Activated CD4-positive, alpha-beta T cell treated with anti-CD3 and anti-CD28 coated beads for 36 hours (primary cell): ENCODE measurements at regions of chr17 and their contacts with region 1.

Region 1: GRCh38 chr17:42609182-42609813 is at the starts of genes RETREG3 and TUBG1:
- DNase-seq: peak; percentile 100
- ATAC-seq: peak; percentile 92
- H3K4me3 Mint-ChIP-seq: peak within 1 kb of the TSS; percentile 95
- H3K27ac Mint-ChIP-seq: peak within 1 kb of the TSS; percentile 97
- H3K4me1 Mint-ChIP-seq: peaks cover 35% of the 10 kb centered on the region
- H3K27me3 Mint-ChIP-seq: no peaks in the 10 kb centered on the region
- total RNA-seq, gene RETREG3: 28.3 to 30.9 TPM
- total RNA-seq, gene TUBG1: 76.1 to 102 TPM

Region 2: DNA sequence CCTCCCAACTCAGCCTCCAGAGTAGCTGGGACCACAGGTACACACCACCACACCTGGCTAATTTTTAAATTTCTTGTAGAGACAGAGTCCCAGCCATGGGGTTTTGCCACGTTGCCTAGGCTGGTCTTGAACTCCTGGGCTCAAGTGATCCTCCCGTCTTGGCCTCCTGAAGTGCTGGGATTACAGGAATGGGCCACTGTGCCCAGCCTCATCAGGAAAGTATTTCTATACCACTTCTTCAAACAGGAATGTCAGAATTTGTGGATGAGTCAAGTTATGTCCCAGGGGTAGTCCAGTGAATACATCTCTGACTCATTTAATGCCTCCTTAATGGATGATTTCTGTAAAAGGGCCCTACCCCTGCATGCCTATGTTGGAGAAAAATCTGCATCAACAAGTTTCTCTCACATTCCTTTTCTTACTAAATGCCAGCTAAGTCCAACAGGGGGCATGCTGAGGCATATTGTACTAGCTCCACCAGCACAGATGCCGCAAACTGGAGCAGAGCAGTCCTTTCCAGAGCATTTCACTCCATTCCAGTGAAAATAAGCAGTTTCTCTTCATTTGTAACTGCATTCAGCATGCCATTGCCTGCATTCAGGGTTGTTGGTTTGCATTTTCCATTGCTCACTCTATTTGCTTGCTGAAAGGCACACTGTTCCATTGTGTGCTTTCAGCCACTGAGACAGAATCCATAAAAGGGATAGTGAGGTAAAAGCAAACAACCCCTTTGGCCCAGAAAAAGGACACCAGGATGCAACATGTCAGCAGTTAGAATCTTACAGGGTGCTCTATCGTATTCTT is 181.0 kb before region 1 on chr17:
- CTCF ChIA-PET with region 1: no interaction called
- POLR2A ChIA-PET with region 1: no interaction called
- intact Hi-C with region 1: no loop called
- DNase-seq: peak; percentile 58
- ATAC-seq: peak; percentile 81
- H3K4me3 Mint-ChIP-seq: no peak overlapping the region
- H3K27ac Mint-ChIP-seq: no peak overlapping the region
- H3K4me1 Mint-ChIP-seq: no peaks in the 10 kb centered on the region
- H3K27me3 Mint-ChIP-seq: peaks cover 14% of the 10 kb centered on the region

Region 3: DNA sequence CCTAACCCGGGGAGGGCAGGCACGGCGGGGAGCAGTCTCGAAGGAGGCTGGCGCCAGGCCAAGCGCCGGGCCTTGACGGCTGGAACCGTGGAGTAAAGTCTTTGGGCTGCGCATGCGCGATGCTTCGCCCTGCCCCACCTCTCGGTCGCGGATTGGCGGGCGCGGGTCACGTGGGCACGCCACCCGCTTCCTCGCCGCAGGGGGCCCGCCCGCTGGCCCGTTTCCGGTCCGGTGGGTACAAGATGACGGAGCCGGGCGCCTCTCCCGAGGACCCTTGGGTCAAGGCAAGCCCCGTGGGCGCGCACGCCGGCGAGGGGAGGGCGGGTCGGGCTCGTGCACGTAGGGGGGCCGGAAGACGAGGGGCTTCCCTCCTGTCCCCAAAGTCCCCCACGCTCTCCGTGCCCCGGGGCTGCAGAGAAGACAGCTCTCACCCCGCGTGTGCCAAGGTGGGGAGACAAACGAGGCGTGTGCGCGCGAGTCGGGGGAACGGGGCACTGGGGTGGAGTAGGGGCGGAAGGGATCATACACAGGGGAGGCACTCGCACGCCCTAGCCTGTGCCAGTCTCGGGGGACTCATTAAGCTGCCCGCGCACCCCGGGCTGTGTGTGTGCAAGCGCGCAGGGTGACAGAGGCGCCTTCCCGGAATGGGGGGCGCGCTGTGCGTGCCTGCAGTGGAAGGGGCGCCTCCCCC is 42.3 kb before region 1 on chr17 and contains the start of gene MLX:
- CTCF ChIA-PET with region 1: interaction called, 3 read pairs
- POLR2A ChIA-PET with region 1: no interaction called
- intact Hi-C with region 1: loop called in 1 of 2 experiments (anchors 1 kb)
- DNase-seq: peak; percentile 95
- ATAC-seq: peak; percentile 74
- H3K4me3 Mint-ChIP-seq: peak within 1 kb of the TSS; percentile 96
- H3K27ac Mint-ChIP-seq: peak within 1 kb of the TSS; percentile 96
- H3K4me1 Mint-ChIP-seq: peaks cover 35% of the 10 kb centered on the region
- H3K27me3 Mint-ChIP-seq: no peaks in the 10 kb centered on the region
- total RNA-seq, gene MLX: 38.7 to 40.7 TPM

Region 4: DNA sequence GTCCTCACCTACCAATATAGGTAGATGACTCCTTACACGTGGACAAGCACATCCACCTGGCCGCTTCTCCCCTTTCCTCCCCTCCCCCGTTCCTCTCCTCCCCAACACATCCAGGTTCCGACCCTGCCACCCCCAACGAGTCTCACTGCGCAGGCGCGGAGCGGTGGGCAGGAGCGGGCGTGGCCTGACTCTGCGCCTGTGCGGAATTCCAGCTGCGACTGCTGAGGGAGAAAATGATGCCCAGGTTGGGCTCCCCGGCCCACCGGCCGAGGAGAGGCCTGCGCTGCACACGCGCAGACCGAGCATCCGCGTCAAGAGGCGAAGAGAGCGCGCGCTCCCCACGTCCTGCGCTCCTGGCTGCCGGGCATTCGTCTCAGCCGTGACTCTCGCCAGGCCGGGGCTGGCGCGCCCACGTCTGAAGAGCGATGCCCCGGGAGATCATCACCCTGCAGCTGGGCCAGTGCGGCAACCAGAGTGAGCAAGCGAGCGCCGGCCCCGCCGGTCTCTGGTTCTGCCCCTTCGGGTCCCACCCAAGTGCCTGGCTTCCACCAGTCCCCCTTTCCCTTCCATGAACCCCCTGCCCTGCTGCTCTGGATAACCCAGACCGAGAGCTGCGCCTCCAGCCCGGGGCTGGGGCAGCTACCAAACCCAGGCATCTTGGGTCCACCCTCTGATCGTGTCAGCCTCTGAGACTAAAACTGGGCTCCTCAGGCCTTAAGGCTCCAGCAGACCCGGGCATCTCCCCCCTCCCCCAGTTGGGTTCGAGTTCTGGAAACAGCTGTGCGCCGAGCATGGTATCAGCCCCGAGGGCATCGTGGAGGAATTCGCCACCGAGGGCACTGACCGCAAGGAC is 50.0 kb after region 1 on chr17 and contains the start of gene TUBG2:
- CTCF ChIA-PET with region 1: interaction called, 3 read pairs
- POLR2A ChIA-PET with region 1: interaction called, 9 read pairs
- intact Hi-C with region 1: loop called in 1 of 2 experiments (anchors 1 kb)
- DNase-seq: peak; percentile 83
- ATAC-seq: peak; percentile 73
- H3K4me3 Mint-ChIP-seq: peak within 1 kb of the TSS; percentile 86
- H3K27ac Mint-ChIP-seq: peak within 1 kb of the TSS; percentile 67
- H3K4me1 Mint-ChIP-seq: peaks cover 26% of the 10 kb centered on the region
- H3K27me3 Mint-ChIP-seq: no peaks in the 10 kb centered on the region
- total RNA-seq, gene TUBG2: 9.0 to 9.2 TPM

Region 5: DNA sequence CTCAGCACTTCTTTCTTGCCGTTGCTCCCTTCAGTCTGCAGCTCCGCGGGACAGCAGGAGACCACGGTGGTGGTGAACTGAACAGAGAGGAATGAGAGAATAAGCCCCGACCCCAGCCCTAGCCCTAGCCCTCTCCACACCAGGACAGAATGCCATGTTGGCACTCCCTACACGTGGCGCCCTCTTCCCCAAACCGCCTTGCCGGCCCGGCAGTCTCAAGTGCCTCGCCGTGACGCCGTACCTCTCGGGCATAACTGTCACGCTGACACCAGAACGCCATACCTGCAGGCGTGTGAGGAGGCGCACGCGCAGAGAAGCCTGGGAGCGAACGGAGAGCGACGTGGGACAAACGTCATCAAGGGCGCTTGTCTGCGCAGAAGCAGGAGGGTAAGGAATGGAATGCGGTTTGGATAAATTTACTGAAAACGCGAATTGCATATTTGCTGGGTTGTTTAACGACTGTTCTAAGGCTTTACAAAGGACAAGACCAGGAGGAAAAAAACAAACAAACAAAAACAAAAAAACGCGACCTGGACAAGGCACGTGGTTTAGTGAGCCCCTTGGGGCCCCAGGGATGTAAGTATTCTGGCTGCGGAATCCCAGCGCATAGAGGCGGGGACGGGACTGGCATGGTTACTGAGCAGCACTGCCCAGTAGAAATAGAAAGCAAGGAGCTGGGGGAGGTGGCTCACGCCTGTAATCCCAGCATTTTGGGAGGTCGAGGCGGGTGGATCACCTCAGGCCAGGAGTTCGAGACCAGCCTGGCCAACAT is 355.0 kb after region 1 on chr17 and contains the start of gene AARSD1:
- CTCF ChIA-PET with region 1: no interaction called
- POLR2A ChIA-PET with region 1: no interaction called
- intact Hi-C with region 1: loop called in 1 of 2 experiments (anchors 1 kb)
- DNase-seq: peak; percentile 95
- ATAC-seq: peak; percentile 95
- H3K4me3 Mint-ChIP-seq: peak within 1 kb of the TSS; percentile 93
- H3K27ac Mint-ChIP-seq: peak within 1 kb of the TSS; percentile 90
- H3K4me1 Mint-ChIP-seq: peaks cover 22% of the 10 kb centered on the region
- H3K27me3 Mint-ChIP-seq: no peaks in the 10 kb centered on the region
- total RNA-seq, gene AARSD1: 40.8 to 58.6 TPM

Region 6: DNA sequence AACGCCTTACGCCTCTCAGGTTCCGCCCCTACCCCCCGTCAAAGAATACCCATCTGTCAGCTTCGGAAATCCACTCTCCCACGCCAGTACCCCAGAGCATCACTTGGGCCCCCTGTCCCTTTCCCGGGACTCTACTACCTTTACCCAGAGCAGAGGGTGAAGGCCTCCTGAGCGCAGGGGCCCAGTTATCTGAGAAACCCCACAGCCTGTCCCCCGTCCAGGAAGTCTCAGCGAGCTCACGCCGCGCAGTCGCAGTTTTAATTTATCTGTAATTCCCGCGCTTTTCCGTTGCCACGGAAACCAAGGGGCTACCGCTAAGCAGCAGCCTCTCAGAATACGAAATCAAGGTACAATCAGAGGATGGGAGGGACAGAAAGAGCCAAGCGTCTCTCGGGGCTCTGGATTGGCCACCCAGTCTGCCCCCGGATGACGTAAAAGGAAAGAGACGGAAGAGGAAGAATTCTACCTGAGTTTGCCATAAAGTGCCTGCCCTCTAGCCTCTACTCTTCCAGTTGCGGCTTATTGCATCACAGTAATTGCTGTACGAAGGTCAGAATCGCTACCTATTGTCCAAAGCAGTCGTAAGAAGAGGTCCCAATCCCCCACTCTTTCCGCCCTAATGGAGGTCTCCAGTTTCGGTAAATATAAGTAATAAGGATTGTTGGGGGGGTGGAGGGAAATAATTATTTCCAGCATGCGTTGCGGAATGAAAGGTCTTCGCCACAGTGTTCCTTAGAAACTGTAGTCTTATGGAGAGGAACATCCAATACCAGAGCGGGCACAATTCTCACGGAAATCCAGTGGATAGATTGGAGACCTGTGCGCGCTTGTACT is 516.1 kb after region 1 on chr17 and contains the start of gene BRCA1:
- CTCF ChIA-PET with region 1: no interaction called
- POLR2A ChIA-PET with region 1: no interaction called
- intact Hi-C with region 1: loop called in 1 of 2 experiments (anchors 1 kb)
- DNase-seq: peak; percentile 97
- ATAC-seq: peak; percentile 99
- H3K4me3 Mint-ChIP-seq: peak within 1 kb of the TSS; percentile 99
- H3K27ac Mint-ChIP-seq: peak within 1 kb of the TSS; percentile 99
- H3K4me1 Mint-ChIP-seq: peaks cover 19% of the 10 kb centered on the region
- H3K27me3 Mint-ChIP-seq: no peaks in the 10 kb centered on the region
- total RNA-seq, gene BRCA1: 99.9 to 115 TPM